Activated CD4-positive, alpha-beta T cell treated with anti-CD3 and anti-CD28 coated beads for 36 hours (primary cell): ENCODE measurements at regions of chr7 and their contacts with region 1.

Region 1: DNA sequence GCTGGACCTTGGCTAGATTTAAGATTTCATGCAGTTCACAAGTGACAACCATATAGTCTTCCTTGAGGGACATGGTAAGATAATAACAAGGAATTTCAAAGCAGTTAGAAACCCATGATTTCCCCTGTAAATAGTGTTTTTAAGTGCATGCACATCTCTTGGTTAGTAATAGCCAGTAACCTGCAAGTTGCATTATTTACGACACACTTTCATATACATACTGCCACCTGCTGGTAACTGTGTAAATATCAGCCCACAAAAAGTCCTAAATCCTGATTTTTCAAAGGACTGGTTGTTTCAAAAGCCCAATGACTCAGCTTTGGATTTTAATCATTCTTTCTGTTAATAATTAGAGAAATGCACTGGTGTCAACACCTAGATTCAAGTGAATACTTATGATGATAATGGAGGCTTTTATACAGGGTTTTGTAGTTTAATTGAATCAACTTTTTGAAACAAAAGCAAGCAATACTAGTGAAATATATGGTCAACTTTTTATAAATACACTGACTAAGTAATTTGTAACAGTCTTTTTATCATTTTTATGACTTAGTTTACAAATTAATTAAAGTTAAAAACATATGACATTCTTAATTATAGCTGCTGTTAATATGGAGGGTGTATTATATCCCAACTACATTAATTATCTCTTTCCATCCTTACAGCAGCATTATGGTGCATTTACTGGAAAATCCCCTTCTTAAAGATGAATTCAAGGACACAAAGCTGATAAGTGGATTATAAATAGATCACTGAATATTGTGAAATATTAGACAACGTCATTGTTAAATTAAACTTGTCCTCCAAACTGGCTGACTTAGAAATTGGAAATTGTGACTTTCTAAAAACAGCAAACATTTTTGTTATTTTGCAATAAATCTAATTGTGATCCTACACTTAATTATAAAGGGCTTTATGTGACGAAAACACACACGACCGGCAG is 367.7 kb upstream of the SEMA3D start:
- DNase-seq: peak; percentile 5
- ATAC-seq: no peak
- H3K4me3 Mint-ChIP-seq: no peak overlapping the region
- H3K27ac Mint-ChIP-seq: no peak overlapping the region
- H3K4me1 Mint-ChIP-seq: no peaks in the 10 kb centered on the region
- H3K27me3 Mint-ChIP-seq: no peaks in the 10 kb centered on the region

Region 2: DNA sequence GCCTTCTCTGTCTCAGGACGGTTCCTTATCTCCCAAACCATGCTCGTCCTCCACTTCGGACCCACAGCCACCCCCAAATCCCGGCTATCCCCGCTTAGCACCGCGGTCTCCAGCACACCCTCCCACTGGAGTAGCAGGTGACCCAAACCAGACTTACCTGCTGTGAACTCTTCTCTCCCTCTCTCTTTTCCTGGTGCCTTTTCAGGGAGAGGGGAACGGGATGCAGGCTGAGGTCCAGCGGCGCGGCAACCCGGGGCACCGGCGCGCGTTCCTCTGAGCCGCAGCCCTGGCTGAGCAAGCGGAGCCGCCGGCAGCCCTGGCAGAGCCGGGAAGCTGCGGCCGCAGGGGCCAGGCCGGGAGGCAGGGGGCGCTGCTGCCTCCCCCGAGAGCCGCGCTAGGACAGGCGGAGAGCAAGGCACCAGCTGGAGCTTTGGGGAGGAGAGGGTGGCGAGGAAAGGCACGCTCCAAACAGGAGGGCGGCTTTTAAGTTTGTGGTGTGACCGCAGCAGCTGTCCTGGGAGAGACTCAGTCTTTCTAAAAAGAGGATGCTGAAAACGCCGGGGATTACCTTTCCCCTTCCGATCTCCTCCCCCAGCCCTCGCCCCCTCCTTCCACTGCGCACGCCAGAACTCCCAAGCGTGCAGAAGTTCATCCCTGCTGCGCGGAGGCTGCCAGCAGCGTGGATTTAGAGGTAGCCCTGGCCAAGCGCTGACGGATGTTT is 367.8 kb before region 1 on chr7 and contains the start of gene SEMA3D:
- CTCF ChIA-PET with region 1: no interaction called
- POLR2A ChIA-PET with region 1: no interaction called
- intact Hi-C with region 1: loop called in 1 of 2 experiments (anchors 10 kb)
- DNase-seq: peak; percentile 56
- ATAC-seq: peak; percentile 73
- H3K4me3 Mint-ChIP-seq: no peak within 1 kb of the TSS
- H3K27ac Mint-ChIP-seq: no peak within 1 kb of the TSS
- H3K4me1 Mint-ChIP-seq: no peaks in the 10 kb centered on the region
- H3K27me3 Mint-ChIP-seq: peaks cover 32% of the 10 kb centered on the region
- total RNA-seq, gene SEMA3D: not detected

Region 3: GRCh38 chr7:85447004-85447403 is 107.5 kb before region 1 on chr7:
- CTCF ChIA-PET with region 1: no interaction called
- POLR2A ChIA-PET with region 1: no interaction called
- intact Hi-C with region 1: no loop called
- DNase-seq: no peak
- ATAC-seq: no peak
- H3K4me3 Mint-ChIP-seq: no peak overlapping the region
- H3K27ac Mint-ChIP-seq: no peak overlapping the region
- H3K4me1 Mint-ChIP-seq: no peaks in the 10 kb centered on the region
- H3K27me3 Mint-ChIP-seq: no peaks in the 10 kb centered on the region

Region 4: GRCh38 chr7:85765698-85766298 is 211.3 kb after region 1 on chr7:
- CTCF ChIA-PET with region 1: no interaction called
- POLR2A ChIA-PET with region 1: no interaction called
- intact Hi-C with region 1: no loop called
- DNase-seq: no peak
- ATAC-seq: no peak
- H3K4me3 Mint-ChIP-seq: no peak overlapping the region
- H3K27ac Mint-ChIP-seq: no peak overlapping the region
- H3K4me1 Mint-ChIP-seq: no peaks in the 10 kb centered on the region
- H3K27me3 Mint-ChIP-seq: no peaks in the 10 kb centered on the region